Caco-2 (cell line): ENCODE measurements at regions of chr11 and their contacts with region 1.

Region 1: DNA sequence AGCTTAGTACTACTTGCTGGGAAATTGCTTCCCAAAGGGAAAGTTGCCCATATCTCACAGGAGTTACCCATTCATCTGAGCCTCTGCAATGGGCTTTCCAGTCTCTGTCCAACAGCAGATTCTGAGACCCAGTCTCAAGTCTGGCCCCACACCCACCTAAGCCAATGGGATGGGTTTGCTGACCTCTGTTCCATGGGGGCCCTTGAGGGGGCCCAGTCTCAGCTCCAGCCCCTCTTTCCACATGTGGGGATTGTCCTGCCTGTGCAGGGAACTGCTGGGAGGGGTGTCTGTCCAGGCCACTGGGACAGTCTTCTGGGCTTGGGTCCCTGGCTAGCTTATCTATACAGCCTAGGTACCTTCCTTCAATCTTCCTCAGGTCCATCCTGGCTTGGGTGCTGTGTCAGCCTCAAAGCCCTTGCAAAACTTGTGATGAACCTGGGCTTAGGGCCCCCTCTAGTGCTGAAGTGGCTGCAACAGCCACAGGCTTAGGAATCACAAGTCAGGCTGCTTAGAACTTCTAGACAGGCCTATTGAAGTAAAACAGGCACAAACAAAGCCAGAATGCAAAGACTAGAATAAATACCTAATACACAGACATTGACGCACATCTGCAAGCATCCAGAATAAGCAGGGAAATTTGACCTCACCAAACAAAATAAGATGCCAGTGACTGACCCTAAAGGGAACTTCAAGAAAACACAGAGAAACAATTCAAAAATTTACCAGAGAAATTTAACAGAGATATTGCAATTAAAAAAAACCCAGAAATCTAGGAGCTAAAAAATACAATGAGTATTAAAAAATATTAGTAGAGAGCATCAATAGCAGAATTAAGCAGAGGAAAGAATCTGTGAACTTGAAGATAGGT is 11.7 kb upstream of the PATL1 start:
- DNase-seq: peak; percentile 88 to 90
- H3K4me3 ChIP-seq: no peak overlapping the region
- H3K4me3 Mint-ChIP-seq: peak overlapping the region; percentile 51
- H3K27ac Mint-ChIP-seq: peak overlapping the region; percentile 7
- H3K4me1 ChIP-seq: peaks cover 34% of the 10 kb centered on the region
- H3K4me1 Mint-ChIP-seq: peaks cover 29% of the 10 kb centered on the region
- H3K27me3 ChIP-seq: no peaks in the 10 kb centered on the region
- H3K27me3 Mint-ChIP-seq: no peaks in the 10 kb centered on the region
- CTCF ChIP-seq: peak; percentile 86 to 88

Region 2: GRCh38 chr11:59171508-59172322 is 508.8 kb before region 1 on chr11 and contains the start of gene DTX4:
- CTCF ChIA-PET with region 1: no interaction called
- POLR2A ChIA-PET with region 1: no interaction called
- intact Hi-C with region 1: loop called (anchors 2 kb)
- DNase-seq: peak; percentile 95
- H3K4me3 ChIP-seq: peak within 1 kb of the TSS; percentile 52
- H3K4me3 Mint-ChIP-seq: peak within 1 kb of the TSS; percentile 74
- H3K27ac Mint-ChIP-seq: peak within 1 kb of the TSS; percentile 73
- H3K4me1 ChIP-seq: peaks cover 21% of the 10 kb centered on the region
- H3K4me1 Mint-ChIP-seq: peaks cover 12% of the 10 kb centered on the region
- H3K27me3 ChIP-seq: no peaks in the 10 kb centered on the region
- H3K27me3 Mint-ChIP-seq: no peaks in the 10 kb centered on the region
- CTCF ChIP-seq: peak; percentile 88 to 97
- total RNA-seq, gene DTX4: 85.6 and 96.7 TPM in 2 replicates

Region 3: DNA sequence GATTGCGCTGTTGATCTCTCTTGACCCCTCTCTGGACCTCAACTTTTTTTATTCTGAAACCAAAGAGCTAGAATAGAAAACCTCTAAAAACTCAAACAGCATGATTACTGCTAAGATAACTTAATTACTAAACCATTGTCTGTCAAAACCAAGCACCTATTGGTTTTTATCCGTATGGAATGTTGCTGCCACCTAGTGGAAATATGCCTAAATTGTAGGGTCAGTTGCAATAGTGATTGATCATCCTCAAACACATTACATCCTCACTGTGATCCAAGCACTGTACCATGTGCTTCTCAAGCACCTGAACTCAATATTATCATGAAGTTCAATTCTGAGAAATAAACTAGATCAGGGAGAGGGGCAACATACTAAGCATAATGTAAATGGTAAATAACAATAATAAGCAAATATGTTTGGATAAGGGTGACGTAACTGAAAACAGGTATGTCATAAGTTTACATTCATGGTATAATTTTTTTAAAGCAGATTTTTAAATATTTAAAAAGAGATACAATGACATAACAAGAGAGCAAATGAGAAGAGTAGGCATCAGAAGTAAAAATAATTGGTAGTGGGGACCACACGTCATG is 250.5 kb before region 1 on chr11:
- CTCF ChIA-PET with region 1: no interaction called
- POLR2A ChIA-PET with region 1: no interaction called
- intact Hi-C with region 1: loop called (anchors 2 kb)
- DNase-seq: peak; percentile 46 to 68
- H3K4me3 ChIP-seq: no peak overlapping the region
- H3K4me3 Mint-ChIP-seq: no peak overlapping the region
- H3K27ac Mint-ChIP-seq: no peak overlapping the region
- H3K4me1 ChIP-seq: no peaks in the 10 kb centered on the region
- H3K4me1 Mint-ChIP-seq: no peaks in the 10 kb centered on the region
- H3K27me3 ChIP-seq: no peaks in the 10 kb centered on the region
- H3K27me3 Mint-ChIP-seq: peaks cover 3% of the 10 kb centered on the region
- CTCF ChIP-seq: peak; percentile 68 to 74

Region 4: GRCh38 chr11:59550368-59550841 is 130.1 kb before region 1 on chr11:
- CTCF ChIA-PET with region 1: no interaction called
- POLR2A ChIA-PET with region 1: no interaction called
- intact Hi-C with region 1: loop called (anchors 2 kb)
- DNase-seq: peak; percentile 96 to 97
- H3K4me3 ChIP-seq: peak overlapping the region; percentile 58
- H3K4me3 Mint-ChIP-seq: peak overlapping the region; percentile 80
- H3K27ac Mint-ChIP-seq: peak overlapping the region; percentile 100
- H3K4me1 ChIP-seq: peaks cover 28% of the 10 kb centered on the region
- H3K4me1 Mint-ChIP-seq: peaks cover 32% of the 10 kb centered on the region
- H3K27me3 ChIP-seq: no peaks in the 10 kb centered on the region
- H3K27me3 Mint-ChIP-seq: peaks cover 7% of the 10 kb centered on the region
- CTCF ChIP-seq: peak; percentile 28 to 63

Region 5: GRCh38 chr11:59647245-59647980 is 33.1 kb before region 1 on chr11:
- CTCF ChIA-PET with region 1: interaction called, 6 read pairs
- POLR2A ChIA-PET with region 1: no interaction called
- intact Hi-C with region 1: loop called (anchors 2 kb)
- DNase-seq: no peak
- H3K4me3 ChIP-seq: no peak overlapping the region
- H3K4me3 Mint-ChIP-seq: no peak overlapping the region
- H3K27ac Mint-ChIP-seq: no peak overlapping the region
- H3K4me1 ChIP-seq: 0 out of 2 replicates have a peak, but pooled peaks cover 3% of the 10 kb centered on the region
- H3K4me1 Mint-ChIP-seq: no peaks in the 10 kb centered on the region
- H3K27me3 ChIP-seq: no peaks in the 10 kb centered on the region
- H3K27me3 Mint-ChIP-seq: no peaks in the 10 kb centered on the region
- CTCF ChIP-seq: no peak

Region 6: DNA sequence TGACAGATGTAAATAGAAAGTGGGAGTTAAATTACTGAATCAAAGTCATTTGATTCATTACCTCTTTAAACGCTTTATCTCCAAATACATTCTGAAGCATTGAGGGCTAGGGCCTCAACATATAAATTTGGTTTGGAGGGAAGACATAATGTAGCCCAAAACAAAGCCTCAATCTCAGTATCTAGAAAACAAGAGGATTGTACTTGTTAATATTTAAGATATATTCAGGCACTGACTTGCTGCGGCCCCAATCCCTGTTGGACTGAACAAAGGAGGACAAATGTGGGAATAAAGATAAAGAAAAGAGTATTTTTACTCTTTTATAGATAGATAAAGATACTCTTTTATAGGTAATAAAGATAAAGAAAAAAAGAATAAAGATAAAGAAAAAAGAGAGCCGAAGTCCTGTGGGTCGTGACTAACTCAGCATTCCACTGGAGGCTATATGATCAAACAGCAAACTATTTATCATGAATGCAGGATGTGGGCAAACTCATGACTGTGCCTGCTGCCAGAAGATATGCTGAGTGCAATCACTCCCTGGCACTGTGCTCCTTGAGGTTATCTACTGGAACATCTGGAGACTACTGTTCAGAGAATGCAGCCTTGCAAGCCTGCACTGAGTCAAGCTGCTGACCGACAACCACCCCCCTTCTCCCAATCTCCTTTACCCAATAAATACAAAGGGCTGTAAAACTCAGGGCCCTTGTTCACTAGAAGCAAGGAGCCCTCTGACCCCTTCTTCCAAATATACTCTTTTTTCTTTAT is 26.2 kb after region 1 on chr11:
- CTCF ChIA-PET with region 1: interaction called, 3 read pairs
- POLR2A ChIA-PET with region 1: no interaction called
- intact Hi-C with region 1: loop called (anchors 1 kb)
- DNase-seq: peak; percentile 88 to 95
- H3K4me3 ChIP-seq: no peak overlapping the region
- H3K4me3 Mint-ChIP-seq: peak overlapping the region; percentile 34
- H3K27ac Mint-ChIP-seq: peak overlapping the region; percentile 84
- H3K4me1 ChIP-seq: peaks cover 53% of the 10 kb centered on the region
- H3K4me1 Mint-ChIP-seq: peaks cover 30% of the 10 kb centered on the region
- H3K27me3 ChIP-seq: no peaks in the 10 kb centered on the region
- H3K27me3 Mint-ChIP-seq: no peaks in the 10 kb centered on the region
- CTCF ChIP-seq: no peak

Region 7: DNA sequence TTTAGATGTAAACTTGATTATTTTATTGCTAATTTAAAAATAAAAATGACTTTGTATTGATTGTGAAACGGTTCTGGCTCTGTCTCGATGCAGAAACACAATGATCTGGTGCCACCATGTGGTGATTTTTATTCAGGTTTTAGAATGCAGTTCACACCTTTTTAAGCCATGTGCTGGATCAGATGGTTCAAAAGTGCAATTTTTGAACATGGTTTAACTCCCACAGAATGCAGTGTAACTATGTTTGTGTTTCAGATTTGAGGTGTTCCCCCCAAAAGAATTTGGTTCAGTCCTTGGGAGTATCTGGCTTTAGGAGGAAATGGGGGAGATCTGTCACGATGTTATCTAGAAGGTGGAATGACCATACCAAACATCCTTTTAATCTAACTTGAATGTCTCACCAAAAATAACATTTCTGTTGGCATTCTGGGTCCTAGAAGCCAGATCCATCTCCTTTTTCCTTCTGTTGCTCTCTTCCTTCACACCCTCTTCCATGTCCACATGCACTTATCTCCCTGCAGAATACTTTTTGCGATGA is 122.2 kb after region 1 on chr11:
- CTCF ChIA-PET with region 1: no interaction called
- POLR2A ChIA-PET with region 1: no interaction called
- intact Hi-C with region 1: loop called (anchors 1 kb)
- DNase-seq: peak in 1 of 2 experiments; percentile 68
- H3K4me3 ChIP-seq: no peak overlapping the region
- H3K4me3 Mint-ChIP-seq: no peak overlapping the region
- H3K27ac Mint-ChIP-seq: no peak overlapping the region
- H3K4me1 ChIP-seq: 0 out of 2 replicates have a peak, but pooled peaks cover 9% of the 10 kb centered on the region
- H3K4me1 Mint-ChIP-seq: peaks cover 19% of the 10 kb centered on the region
- H3K27me3 ChIP-seq: no peaks in the 10 kb centered on the region
- H3K27me3 Mint-ChIP-seq: no peaks in the 10 kb centered on the region
- CTCF ChIP-seq: peak; percentile 60 to 68

Region 8: DNA sequence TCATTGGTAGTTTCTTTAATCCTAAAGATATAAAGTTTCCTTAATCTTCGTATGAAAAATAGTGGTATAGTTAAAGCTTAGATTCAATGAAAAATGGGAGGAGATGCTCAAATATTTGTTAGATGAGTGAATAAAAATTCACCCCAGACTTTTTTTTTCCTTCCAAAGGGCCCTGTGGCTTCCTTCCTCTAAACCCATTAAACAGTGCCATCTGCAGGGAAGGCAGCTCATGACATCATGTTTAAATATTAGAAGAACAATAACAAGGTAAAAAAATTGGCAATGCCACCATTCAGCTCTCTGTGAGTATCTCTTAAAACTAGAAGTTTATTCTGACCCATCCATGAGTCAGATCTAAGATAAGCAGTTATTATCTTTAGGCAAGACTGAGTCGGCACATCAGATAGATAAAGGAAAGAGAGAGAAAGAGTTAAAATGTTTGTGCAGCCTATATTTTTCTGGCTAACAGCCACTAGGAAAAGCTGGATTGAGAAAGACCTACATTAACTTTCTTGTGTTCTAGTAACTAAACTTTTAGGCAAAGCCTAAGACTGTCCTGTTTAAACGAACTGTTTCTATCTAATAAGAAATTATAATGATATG is 238.6 kb after region 1 on chr11:
- CTCF ChIA-PET with region 1: no interaction called
- POLR2A ChIA-PET with region 1: no interaction called
- intact Hi-C with region 1: no loop called
- DNase-seq: peak in 1 of 2 experiments; percentile 58
- H3K4me3 ChIP-seq: no peak overlapping the region
- H3K4me3 Mint-ChIP-seq: no peak overlapping the region
- H3K27ac Mint-ChIP-seq: no peak overlapping the region
- H3K4me1 ChIP-seq: no peaks in the 10 kb centered on the region
- H3K4me1 Mint-ChIP-seq: no peaks in the 10 kb centered on the region
- H3K27me3 ChIP-seq: no peaks in the 10 kb centered on the region
- H3K27me3 Mint-ChIP-seq: no peaks in the 10 kb centered on the region
- CTCF ChIP-seq: peak; percentile 50 to 57